Tibial artery (tissue), 4 donors: ENCODE measurements at regions of chr4 and their contacts with region 1.

Region 1: DNA sequence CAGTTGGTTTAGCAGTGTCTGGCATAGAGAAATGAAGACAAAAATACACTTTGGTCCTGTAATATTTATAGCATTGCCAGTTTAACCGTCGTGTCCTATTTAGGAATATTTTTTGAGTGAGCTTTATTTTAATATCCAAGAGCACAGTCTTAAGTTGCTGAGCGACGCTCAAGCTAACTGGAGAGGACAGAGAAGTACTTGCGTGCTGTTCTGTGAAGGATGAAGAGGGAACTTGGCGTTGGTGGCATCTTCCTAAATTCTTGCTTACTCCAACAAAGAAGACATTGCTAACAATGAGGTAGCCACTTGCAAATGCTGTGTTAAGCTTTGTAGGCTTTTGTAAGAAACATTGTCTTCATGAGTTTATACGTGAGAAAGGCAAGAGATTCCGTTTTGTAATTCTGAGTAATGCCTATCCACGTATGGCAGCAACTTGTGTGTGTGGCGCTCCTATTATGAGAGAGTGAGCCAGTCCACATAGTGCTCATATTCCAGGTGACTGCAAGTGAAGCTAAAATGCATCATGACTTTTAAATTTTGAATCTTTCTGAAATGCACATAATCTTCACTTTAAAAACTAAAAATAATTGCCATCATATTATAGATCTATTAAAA is 50.6 kb downstream of the SYNPO2 start:
- DNase-seq: no peak
- H3K4me3 ChIP-seq: peak overlapping the region; percentile 32 to 41
- H3K27ac ChIP-seq: peak overlapping the region; percentile 78 to 87
- H3K4me1 ChIP-seq: peaks cover 0 to 97% (median 37%) of the 10 kb centered on the region in 4 donors
- H3K27me3 ChIP-seq: no peaks in the 10 kb centered on the region
- CTCF ChIP-seq: no peak

Region 2: DNA sequence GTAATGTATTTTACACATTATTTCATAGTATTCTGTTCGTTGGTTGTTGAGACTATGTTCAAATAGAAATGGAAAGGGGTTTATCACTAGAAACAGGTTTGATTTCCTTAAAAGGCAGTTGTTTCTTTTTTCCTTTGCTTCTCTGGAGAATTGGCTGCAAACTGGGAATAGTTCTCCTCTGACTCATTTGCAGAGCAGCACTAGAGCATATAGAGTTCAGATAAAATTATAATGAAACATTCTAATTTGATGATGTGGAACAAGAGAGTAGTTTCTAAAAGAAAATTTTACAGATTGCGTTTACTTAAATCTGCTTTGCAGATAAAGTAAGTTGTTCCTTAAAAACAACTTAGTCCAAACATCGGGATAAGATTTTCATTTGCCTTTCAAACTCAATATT is 20.9 kb before region 1 on chr4:
- intact Hi-C with region 1: loop called (anchors 1 kb)
- DNase-seq: no peak
- H3K4me3 ChIP-seq: no peak overlapping the region
- H3K27ac ChIP-seq: peak overlapping the region; percentile 84 to 90
- H3K4me1 ChIP-seq: peaks cover 0 to 94% (median 28%) of the 10 kb centered on the region in 4 donors
- H3K27me3 ChIP-seq: no peaks in the 10 kb centered on the region
- CTCF ChIP-seq: no peak